Posterior cingulate gyrus (tissue), 11 donors: ENCODE measurements at regions of chr4 and their contacts with region 1.

Region 1: DNA sequence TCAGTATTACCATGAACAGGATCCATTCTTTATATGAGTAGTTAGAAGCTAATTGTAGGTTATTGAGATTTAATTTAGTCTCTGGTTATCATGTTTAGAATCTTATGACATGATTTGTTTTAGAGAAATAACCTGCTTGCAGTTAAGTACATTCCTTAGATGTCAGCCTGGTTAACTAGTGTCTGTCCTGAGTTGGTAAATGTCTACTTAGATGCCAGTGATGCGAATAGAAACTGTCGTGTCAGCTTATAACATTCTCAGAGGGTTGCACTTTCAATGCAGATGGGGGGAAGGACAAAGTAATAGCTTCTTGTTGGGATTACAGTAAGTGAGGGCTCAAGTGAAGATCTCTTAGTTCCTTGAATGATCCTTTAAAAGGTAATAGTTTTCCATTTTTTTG is 227.8 kb upstream of the SPRY1 start:
- DNase-seq: no peak

Region 2: DNA sequence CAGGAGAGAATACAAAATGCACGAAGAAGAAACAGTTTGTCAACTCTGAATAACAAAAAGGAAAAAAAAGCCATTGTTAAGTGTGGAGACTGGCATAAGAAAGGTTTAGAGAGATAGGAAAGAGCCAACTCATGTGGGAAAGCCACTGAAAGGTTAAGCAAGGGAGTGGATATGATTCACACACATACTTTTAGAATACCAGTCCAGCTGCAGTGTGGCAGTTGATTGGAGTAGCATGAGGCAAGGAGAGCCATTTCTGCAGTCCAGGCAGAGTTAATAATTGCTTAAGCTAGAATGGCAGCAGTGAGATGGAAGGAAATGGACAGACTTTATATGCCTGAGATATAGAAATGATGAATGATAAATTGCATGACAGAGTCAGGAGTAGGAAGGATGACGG is 826.9 kb before region 1 on chr4:
- intact Hi-C with region 1: loop called (anchors 10 kb)
- DNase-seq: no peak